ENCODE measurements at regions of chr17 and their contacts with region 1.

Region 1: GRCh38 chr17:45218895-45219661 is 2.6 kb upstream of the FMNL1 start:
- DNase-seq: peak; percentile 73 to 88 (median 82)
- H3K4me3 ChIP-seq: peak overlapping the region; percentile 24
- H3K4me3 Mint-ChIP-seq: peak overlapping the region; percentile 70 to 93 (median 90)
- H3K27ac ChIP-seq: no peak overlapping the region
- H3K27ac Mint-ChIP-seq: peak overlapping the region; percentile 60 to 97 (median 90)
- H3K4me1 ChIP-seq: peaks cover 24% of the 10 kb centered on the region
- H3K4me1 Mint-ChIP-seq: peaks cover 32 to 46% (median 34%) of the 10 kb centered on the region in 3 donors
- H3K27me3 ChIP-seq: no peaks in the 10 kb centered on the region
- H3K27me3 Mint-ChIP-seq: no peaks in the 10 kb centered on the region

Region 2: DNA sequence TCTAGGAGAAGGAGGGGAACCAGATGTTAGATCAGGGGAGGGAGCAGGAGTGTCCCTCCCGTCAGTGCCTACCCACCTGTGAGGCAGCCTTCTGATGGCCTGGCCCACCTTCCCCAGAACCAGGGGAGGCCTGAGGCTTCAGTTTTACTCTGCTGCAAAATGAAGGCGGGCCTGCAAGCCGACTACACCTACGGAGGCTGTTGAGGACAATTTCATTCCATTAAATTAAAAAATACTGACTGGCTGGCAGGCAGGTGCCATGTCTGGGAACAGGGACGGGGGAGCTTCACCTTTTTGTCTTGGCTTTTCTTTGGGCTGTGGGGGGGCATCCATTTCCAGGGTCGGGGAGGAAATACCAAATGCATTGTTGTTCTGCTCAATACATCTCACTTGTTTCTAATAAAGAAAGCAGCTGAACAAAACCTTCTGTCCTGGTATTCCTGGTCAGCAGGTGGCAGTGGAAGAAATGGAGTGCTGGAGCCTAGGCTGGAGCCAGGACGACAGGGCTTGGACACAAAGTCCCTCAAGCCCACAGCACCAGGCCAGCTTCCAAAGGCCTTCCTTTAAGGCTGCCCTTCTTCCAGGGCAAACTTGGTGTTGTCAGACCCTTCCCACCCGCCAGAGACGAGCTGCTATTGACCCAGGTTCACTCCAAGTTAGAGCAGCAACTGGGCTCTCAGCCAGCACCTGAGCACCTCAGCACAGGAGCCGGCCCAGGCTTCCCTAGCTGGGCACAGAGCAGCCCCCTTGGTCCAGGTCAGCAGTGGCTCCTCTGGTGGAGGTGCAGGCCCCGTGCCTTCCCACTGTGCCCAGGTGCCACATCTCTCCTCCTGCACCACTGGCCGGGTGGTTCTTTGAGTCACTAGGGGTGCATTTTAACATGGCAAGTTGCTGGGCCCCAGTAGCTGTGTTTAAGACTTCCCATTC is 110.2 kb before region 1 on chr17:
- CTCF ChIA-PET with region 1: no interaction called
- POLR2A ChIA-PET with region 1: no interaction called
- DNase-seq: no peak
- H3K4me3 ChIP-seq: no peak overlapping the region
- H3K4me3 Mint-ChIP-seq: no peak overlapping the region
- H3K27ac ChIP-seq: no peak overlapping the region
- H3K27ac Mint-ChIP-seq: peak overlapping the region in 3 of 8 donors; percentile 29 to 58 (median 51)
- H3K4me1 ChIP-seq: no peaks in the 10 kb centered on the region
- H3K4me1 Mint-ChIP-seq: no peaks in the 10 kb centered on the region
- H3K27me3 ChIP-seq: no peaks in the 10 kb centered on the region
- H3K27me3 Mint-ChIP-seq: no peaks in the 10 kb centered on the region

Region 3: DNA sequence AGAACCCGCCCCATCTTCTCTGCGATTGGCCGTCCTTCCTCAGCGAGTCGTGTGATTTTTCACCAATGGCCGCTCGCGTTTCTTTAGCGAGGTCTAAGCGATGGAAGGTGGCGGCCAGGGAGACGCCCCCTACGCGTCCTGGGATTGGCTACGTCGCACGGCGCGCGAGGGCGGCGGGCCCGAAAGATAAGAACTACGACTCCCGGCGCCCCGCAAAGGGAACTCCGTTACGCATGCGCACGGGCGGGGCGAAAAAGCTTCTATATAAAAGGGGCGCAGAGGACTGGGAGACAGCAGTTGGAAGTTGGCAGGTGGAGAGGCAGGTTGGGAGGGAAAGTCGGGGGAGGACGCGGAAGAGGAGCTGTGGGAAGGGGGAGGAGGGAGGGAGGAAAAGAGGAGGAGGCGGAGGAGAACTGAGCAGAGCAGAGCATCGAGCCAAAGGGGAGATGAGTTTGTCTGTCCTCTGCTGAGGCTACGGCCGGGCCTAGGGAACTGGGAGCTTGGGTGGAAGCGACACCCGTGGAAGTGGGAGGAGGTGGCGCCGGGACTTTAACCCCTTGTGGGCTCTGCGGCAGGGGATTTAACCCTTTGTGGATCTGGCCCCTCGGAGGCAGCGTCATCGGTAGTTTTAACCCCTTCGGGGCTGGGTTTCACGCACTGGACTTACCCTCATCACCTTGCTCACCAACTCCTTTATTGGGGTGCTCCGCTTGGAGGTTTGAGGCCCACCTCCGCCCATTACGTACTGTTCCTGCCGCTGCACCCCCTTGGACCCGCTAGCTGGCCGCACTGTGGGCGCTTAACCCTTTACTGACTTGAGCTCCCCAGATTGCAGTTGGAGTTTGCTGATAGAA is 70.7 kb before region 1 on chr17 and contains the start of gene HEXIM1:
- CTCF ChIA-PET with region 1: interaction called, 9 read pairs
- POLR2A ChIA-PET with region 1: interaction called, 15 read pairs
- DNase-seq: peak; percentile 97 to 100 (median 100)
- H3K4me3 ChIP-seq: peak within 1 kb of the TSS; percentile 91
- H3K4me3 Mint-ChIP-seq: peak within 1 kb of the TSS; percentile 90 to 99 (median 95)
- H3K27ac ChIP-seq: peak within 1 kb of the TSS; percentile 98
- H3K27ac Mint-ChIP-seq: peak within 1 kb of the TSS; percentile 97 to 100 (median 99)
- H3K4me1 ChIP-seq: peaks cover 43% of the 10 kb centered on the region
- H3K4me1 Mint-ChIP-seq: peaks cover 47 to 67% (median 61%) of the 10 kb centered on the region in 3 donors
- H3K27me3 ChIP-seq: no peaks in the 10 kb centered on the region
- H3K27me3 Mint-ChIP-seq: peaks cover 0 to 11% of the 10 kb centered on the region in 2 donors
- total RNA-seq, gene HEXIM1: 48.3 to 51.1 TPM

Region 4: GRCh38 chr17:45247429-45248131 is 28.5 kb after region 1 on chr17:
- CTCF ChIA-PET with region 1: interaction called, 55 read pairs
- POLR2A ChIA-PET with region 1: interaction called, 189 read pairs
- DNase-seq: peak; percentile 92 to 99 (median 98)
- H3K4me3 ChIP-seq: peak overlapping the region; percentile 69
- H3K4me3 Mint-ChIP-seq: peak overlapping the region; percentile 85 to 94 (median 88)
- H3K27ac ChIP-seq: peak overlapping the region; percentile 90
- H3K27ac Mint-ChIP-seq: peak overlapping the region; percentile 93 to 100 (median 97)
- H3K4me1 ChIP-seq: peaks cover 56% of the 10 kb centered on the region
- H3K4me1 Mint-ChIP-seq: peaks cover 31 to 71% (median 40%) of the 10 kb centered on the region in 3 donors
- H3K27me3 ChIP-seq: no peaks in the 10 kb centered on the region
- H3K27me3 Mint-ChIP-seq: no peaks in the 10 kb centered on the region

Region 5: DNA sequence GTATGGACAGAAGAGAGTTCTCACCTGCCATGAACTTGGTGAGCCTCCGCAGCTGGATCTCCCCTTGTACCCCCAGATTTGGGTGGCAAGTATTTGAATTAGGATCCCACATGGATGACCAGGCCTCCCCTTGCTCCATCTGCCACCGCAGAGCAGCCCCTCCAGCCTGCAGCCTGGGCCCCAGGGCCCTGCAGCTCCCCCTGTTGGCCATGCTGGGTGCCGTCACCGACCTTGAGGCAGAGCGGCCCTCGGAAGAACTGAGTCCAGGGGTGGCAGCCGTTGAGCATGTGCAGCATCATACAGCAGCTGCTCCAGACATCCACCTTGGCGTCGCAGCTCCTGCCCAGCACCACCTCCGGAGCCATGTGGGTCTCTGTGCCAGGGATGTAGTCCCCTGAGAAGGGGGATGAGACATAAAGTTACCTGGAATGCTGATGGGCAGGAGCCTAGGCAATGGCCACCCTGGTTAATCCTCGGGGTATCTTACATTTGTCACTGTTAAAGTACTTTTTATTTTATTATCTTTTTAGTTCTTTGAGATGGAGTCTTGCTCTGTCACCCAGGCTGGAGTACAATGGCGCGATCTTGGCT is 51.8 kb after region 1 on chr17:
- CTCF ChIA-PET with region 1: interaction called, 31 read pairs
- POLR2A ChIA-PET with region 1: no interaction called
- DNase-seq: peak; percentile 30 to 62 (median 40)
- H3K4me3 ChIP-seq: no peak overlapping the region
- H3K4me3 Mint-ChIP-seq: no peak overlapping the region
- H3K27ac ChIP-seq: no peak overlapping the region
- H3K27ac Mint-ChIP-seq: peak overlapping the region in 1 of 8 donors; percentile 65
- H3K4me1 ChIP-seq: no peaks in the 10 kb centered on the region
- H3K4me1 Mint-ChIP-seq: no peaks in the 10 kb centered on the region
- H3K27me3 ChIP-seq: no peaks in the 10 kb centered on the region
- H3K27me3 Mint-ChIP-seq: no peaks in the 10 kb centered on the region

Region 6: GRCh38 chr17:45317112-45317928 is 98.2 kb after region 1 on chr17:
- CTCF ChIA-PET with region 1: interaction called, 17 read pairs
- POLR2A ChIA-PET with region 1: interaction called, 12 read pairs
- DNase-seq: peak; percentile 99 to 100 (median 100)
- H3K4me3 ChIP-seq: peak overlapping the region; percentile 81
- H3K4me3 Mint-ChIP-seq: peak overlapping the region; percentile 83 to 96 (median 90)
- H3K27ac ChIP-seq: peak overlapping the region; percentile 66
- H3K27ac Mint-ChIP-seq: peak overlapping the region; percentile 83 to 98 (median 94)
- H3K4me1 ChIP-seq: peaks cover 86% of the 10 kb centered on the region
- H3K4me1 Mint-ChIP-seq: peaks cover 75 to 89% (median 82%) of the 10 kb centered on the region in 3 donors
- H3K27me3 ChIP-seq: no peaks in the 10 kb centered on the region
- H3K27me3 Mint-ChIP-seq: peaks cover 0 to 3% of the 10 kb centered on the region in 2 donors

Measured in CD8-positive, alpha-beta memory T cell (primary cell).